Breast epithelium (tissue), 4 donors: ENCODE measurements at regions of chr2 and their contacts with region 1.

Region 1: DNA sequence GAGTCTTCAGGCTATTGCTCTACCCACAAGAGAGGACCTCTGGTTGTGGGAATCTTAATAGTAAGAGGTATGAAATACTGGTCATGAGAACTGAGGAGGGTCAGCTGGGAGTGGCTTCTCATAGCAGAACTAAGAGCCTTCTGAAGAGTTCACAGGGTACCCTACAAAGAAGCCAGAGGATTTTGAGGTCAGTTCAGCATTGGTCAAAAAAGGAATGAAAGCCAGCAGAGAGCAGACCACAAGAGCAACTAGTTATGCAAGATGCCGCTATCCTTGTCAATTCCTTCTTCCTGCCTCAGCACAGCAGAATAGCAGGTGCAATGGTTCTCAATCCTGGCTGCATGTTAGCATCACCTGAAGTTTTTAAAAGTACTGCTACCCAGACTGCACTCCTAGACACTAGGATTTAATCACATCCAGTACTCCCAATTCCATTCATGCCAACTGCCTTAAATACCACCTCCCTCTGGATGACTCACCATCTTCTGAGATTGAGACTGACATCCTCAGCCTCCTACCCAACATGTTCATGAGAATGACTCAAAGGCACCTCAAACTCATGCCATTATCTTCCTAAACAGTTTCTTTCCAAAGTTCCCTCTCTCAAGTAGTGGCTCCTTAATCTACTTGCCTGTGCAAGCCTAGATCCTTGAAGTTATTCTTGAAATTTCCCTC is 81.0 kb upstream of the RBMS1 start:
- DNase-seq: no peak
- H3K4me3 ChIP-seq: no peak overlapping the region
- H3K27ac ChIP-seq: no peak overlapping the region
- H3K4me1 ChIP-seq: no peaks in the 10 kb centered on the region
- H3K27me3 ChIP-seq: no peaks in the 10 kb centered on the region
- CTCF ChIP-seq: no peak
- POLR2A ChIP-seq: no peak

Region 2: DNA sequence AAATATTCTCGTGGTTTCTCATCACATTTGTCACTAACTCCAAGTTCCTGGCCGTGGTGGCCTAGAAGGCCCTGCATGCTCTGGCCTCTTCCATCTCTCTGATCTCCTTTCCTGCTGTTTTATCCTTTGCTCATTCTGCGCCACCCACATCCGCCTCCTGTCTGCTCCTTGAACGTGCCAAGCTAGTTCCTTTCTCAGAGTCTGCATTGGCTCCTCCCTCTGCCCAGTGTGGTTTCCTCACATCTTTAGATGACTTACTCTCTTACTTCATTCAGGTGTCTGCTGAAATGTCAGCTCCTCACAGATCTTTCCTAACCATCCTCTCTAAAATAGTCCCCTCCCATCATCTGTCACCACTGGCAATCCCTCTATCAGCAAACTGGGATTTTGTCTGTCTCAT is 77.6 kb after region 1 on chr2:
- intact Hi-C with region 1: loop called (anchors 5 kb)
- DNase-seq: peak in 1 of 2 donors; percentile 58
- H3K4me3 ChIP-seq: no peak overlapping the region
- H3K27ac ChIP-seq: peak overlapping the region in 1 of 2 donors; percentile 21
- H3K4me1 ChIP-seq: peaks cover 0 to 4% of the 10 kb centered on the region in 2 donors
- H3K27me3 ChIP-seq: no peaks in the 10 kb centered on the region
- CTCF ChIP-seq: no peak
- POLR2A ChIP-seq: no peak